Activated CD8-positive, alpha-beta T cell treated with anti-CD3 and anti-CD28 coated beads for 36 hours (primary cell): ENCODE measurements at regions of chr18 and their contacts with region 1.

Region 1: GRCh38 chr18:63518178-63519012 is 23.8 kb upstream of the SERPINB12 start:
- DNase-seq: peak; percentile 72
- ATAC-seq: peak; percentile 86
- H3K4me3 Mint-ChIP-seq: no peak overlapping the region
- H3K27ac Mint-ChIP-seq: no peak overlapping the region
- H3K4me1 Mint-ChIP-seq: no peaks in the 10 kb centered on the region
- H3K27me3 Mint-ChIP-seq: peaks cover 7% of the 10 kb centered on the region
- CTCF ChIP-seq: peak; percentile 75

Region 2: DNA sequence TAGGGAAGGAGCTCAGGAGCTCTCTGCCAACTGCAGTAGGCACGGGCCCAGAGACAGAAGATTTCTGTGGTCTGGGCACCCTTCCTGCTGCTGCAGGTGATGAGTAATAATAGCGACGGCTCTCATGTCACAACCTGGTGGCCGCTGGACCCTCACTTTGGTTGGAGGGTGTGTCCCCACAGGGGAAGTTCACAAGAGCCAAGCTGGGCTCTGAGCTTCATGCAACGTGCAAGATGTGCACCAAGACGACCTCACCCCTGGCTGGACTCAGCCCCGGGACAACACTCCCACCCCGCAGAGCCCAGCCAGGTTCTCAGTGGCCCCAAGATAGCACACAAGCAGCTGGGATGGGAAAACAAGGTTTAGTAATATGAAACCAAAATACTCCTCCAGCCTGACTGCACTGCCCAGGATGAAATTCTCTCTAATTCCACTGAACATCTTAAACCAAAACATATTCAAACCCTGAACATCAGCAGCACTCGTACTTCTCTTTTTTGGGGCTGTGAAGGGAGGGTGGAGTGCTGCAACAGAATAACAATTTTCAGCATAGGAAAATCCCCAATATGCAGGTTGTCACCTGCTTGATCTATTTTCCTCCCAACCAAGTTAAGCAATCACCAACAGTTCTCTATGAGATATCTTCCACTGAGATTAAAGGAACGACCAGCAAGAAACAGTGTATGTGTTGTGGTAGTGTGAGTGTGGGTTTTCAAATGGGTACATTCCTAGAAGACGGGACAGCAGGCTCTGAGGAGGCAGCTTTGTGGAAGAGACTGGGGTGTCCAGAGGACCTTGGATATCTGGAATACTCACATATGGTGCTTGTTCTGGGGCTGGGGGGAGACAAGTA is 225.3 kb before region 1 on chr18:
- CTCF ChIA-PET with region 1: no interaction called
- POLR2A ChIA-PET with region 1: no interaction called
- intact Hi-C with region 1: no loop called
- DNase-seq: peak; percentile 67
- ATAC-seq: peak; percentile 52
- H3K4me3 Mint-ChIP-seq: peak overlapping the region; percentile 6
- H3K27ac Mint-ChIP-seq: peak overlapping the region; percentile 73
- H3K4me1 Mint-ChIP-seq: peaks cover 61% of the 10 kb centered on the region
- H3K27me3 Mint-ChIP-seq: no peaks in the 10 kb centered on the region
- CTCF ChIP-seq: no peak

Region 3: GRCh38 chr18:63505566-63506335 is 12.6 kb before region 1 on chr18:
- CTCF ChIA-PET with region 1: interaction called, 60 read pairs
- POLR2A ChIA-PET with region 1: no interaction called
- intact Hi-C with region 1: no loop called
- DNase-seq: peak; percentile 63
- ATAC-seq: peak; percentile 66
- H3K4me3 Mint-ChIP-seq: no peak overlapping the region
- H3K27ac Mint-ChIP-seq: no peak overlapping the region
- H3K4me1 Mint-ChIP-seq: no peaks in the 10 kb centered on the region
- H3K27me3 Mint-ChIP-seq: peaks cover 22% of the 10 kb centered on the region
- CTCF ChIP-seq: peak; percentile 72

Region 4: GRCh38 chr18:63545000-63545399 is 26.6 kb after region 1 on chr18:
- CTCF ChIA-PET with region 1: interaction called, 14 read pairs
- POLR2A ChIA-PET with region 1: no interaction called
- intact Hi-C with region 1: no loop called
- DNase-seq: no peak
- ATAC-seq: no peak
- H3K4me3 Mint-ChIP-seq: no peak overlapping the region
- H3K27ac Mint-ChIP-seq: no peak overlapping the region
- H3K4me1 Mint-ChIP-seq: no peaks in the 10 kb centered on the region
- H3K27me3 Mint-ChIP-seq: peaks cover 15% of the 10 kb centered on the region
- CTCF ChIP-seq: no peak

Region 5: GRCh38 chr18:63578357-63578958 is 60.1 kb after region 1 on chr18:
- CTCF ChIA-PET with region 1: interaction called, 125 read pairs
- POLR2A ChIA-PET with region 1: no interaction called
- intact Hi-C with region 1: loop called (anchors 5 kb)
- DNase-seq: peak; percentile 28
- ATAC-seq: peak; percentile 51
- H3K4me3 Mint-ChIP-seq: no peak overlapping the region
- H3K27ac Mint-ChIP-seq: no peak overlapping the region
- H3K4me1 Mint-ChIP-seq: no peaks in the 10 kb centered on the region
- H3K27me3 Mint-ChIP-seq: peaks cover 9% of the 10 kb centered on the region
- CTCF ChIP-seq: peak; percentile 63

Region 6: DNA sequence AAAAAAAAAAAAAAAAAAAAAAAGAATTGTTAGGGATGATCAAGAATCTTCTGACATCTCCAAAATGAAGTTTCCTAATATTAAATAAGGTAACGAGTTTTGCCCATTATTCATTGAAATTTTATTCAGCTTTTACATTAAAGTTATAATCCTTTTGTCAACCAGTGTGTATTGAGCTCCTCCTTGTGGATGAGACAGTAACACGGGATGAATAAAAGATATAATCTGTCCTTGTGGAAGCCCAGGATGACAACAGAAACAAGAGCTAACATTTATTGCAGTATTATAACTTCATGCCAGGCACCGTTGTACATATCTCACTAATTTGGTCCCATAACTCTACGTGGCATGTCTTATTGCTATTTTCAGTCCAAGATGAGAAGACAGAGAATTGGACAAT is 223.4 kb after region 1 on chr18:
- CTCF ChIA-PET with region 1: interaction called, 12 read pairs
- POLR2A ChIA-PET with region 1: no interaction called
- intact Hi-C with region 1: no loop called
- DNase-seq: no peak
- ATAC-seq: no peak
- H3K4me3 Mint-ChIP-seq: no peak overlapping the region
- H3K27ac Mint-ChIP-seq: no peak overlapping the region
- H3K4me1 Mint-ChIP-seq: no peaks in the 10 kb centered on the region
- H3K27me3 Mint-ChIP-seq: peaks cover 2% of the 10 kb centered on the region
- CTCF ChIP-seq: no peak

Region 7: GRCh38 chr18:63936156-63936931 is 417.9 kb after region 1 on chr18:
- CTCF ChIA-PET with region 1: interaction called, 22 read pairs
- POLR2A ChIA-PET with region 1: no interaction called
- intact Hi-C with region 1: loop called (anchors 5 kb)
- DNase-seq: peak; percentile 78
- ATAC-seq: peak; percentile 97
- H3K4me3 Mint-ChIP-seq: peak overlapping the region; percentile 56
- H3K27ac Mint-ChIP-seq: no peak overlapping the region
- H3K4me1 Mint-ChIP-seq: no peaks in the 10 kb centered on the region
- H3K27me3 Mint-ChIP-seq: peaks cover 13% of the 10 kb centered on the region
- CTCF ChIP-seq: peak; percentile 51

Region 8: GRCh38 chr18:63994783-63995399 is 476.5 kb after region 1 on chr18:
- CTCF ChIA-PET with region 1: interaction called, 14 read pairs
- POLR2A ChIA-PET with region 1: no interaction called
- intact Hi-C with region 1: no loop called
- DNase-seq: peak; percentile 57
- ATAC-seq: peak; percentile 13
- H3K4me3 Mint-ChIP-seq: no peak overlapping the region
- H3K27ac Mint-ChIP-seq: no peak overlapping the region
- H3K4me1 Mint-ChIP-seq: peaks cover 2% of the 10 kb centered on the region
- H3K27me3 Mint-ChIP-seq: no peaks in the 10 kb centered on the region
- CTCF ChIP-seq: peak; percentile 90